CD4-positive, alpha-beta memory T cell (primary cell): ENCODE measurements at regions of chr5 and their contacts with region 1.

Region 1: GRCh38 chr5:139403787-139404483 is at the start of gene SPATA24:
- DNase-seq: peak; percentile 97 to 98 (median 98)
- H3K4me3 ChIP-seq: peak within 1 kb of the TSS; percentile 71 to 90
- H3K4me3 Mint-ChIP-seq: peak within 1 kb of the TSS; percentile 91 to 99 (median 94)
- H3K27ac ChIP-seq: peak within 1 kb of the TSS; percentile 85
- H3K27ac Mint-ChIP-seq: peak within 1 kb of the TSS; percentile 91 to 100 (median 99)
- H3K4me1 ChIP-seq: peaks cover 20% of the 10 kb centered on the region
- H3K4me1 Mint-ChIP-seq: peaks cover 16 to 31% (median 22%) of the 10 kb centered on the region in 4 donors
- H3K27me3 ChIP-seq: no peaks in the 10 kb centered on the region
- H3K27me3 Mint-ChIP-seq: no peaks in the 10 kb centered on the region
- total RNA-seq, gene SPATA24: 5.6 to 7.5 TPM

Region 2: DNA sequence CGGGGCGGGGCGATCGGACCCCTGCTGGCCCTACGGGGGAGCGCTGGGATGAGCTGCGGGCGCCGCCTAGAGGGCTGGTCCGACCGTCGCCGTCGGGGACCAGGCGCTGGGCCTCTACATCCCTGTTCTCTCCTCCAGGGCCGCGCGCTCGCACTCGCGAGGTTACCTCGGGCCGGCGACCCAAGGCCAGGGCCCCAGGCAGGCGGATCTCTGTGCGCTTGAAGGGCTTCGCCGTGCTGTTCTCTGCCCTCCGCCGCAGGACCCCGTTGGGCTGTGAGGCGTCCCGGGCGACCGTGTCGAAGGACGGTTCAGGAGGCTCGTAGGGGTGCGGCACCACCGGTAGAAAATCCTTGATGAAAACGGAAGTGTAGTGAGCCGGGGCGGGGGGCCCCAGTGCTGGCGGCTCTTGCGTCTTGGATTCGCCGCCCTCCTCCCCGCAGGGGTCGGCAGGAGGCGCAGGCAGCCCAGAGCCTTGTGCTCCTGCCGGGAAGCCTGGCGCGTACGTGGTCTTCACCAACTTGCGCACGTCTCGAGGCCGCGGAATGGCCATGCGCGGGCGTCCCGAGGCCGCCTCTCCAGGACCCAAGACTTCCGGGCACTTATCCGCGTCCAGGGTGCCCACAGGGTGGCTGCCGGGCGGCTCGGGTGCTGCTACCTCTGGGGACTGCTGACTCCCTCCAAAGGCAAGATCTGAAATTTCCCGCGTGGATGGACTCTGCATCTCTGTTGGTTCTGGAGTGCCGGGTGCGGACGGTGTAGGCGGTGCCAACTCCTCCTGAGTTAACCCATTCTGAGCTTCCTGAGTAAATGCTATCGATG is 11.0 kb before region 1 on chr5:
- CTCF ChIA-PET with region 1: interaction called, 25 read pairs
- POLR2A ChIA-PET with region 1: interaction called, 49 read pairs
- intact Hi-C with region 1: loop called (anchors 1 kb)
- DNase-seq: peak; percentile 69 to 81 (median 73)
- H3K4me3 ChIP-seq: peak overlapping the region; percentile 61 to 69
- H3K4me3 Mint-ChIP-seq: peak overlapping the region; percentile 88 to 94 (median 88)
- H3K27ac ChIP-seq: peak overlapping the region; percentile 39
- H3K27ac Mint-ChIP-seq: peak overlapping the region; percentile 57 to 93 (median 85)
- H3K4me1 ChIP-seq: peaks cover 42% of the 10 kb centered on the region
- H3K4me1 Mint-ChIP-seq: peaks cover 22 to 43% (median 30%) of the 10 kb centered on the region in 4 donors
- H3K27me3 ChIP-seq: no peaks in the 10 kb centered on the region
- H3K27me3 Mint-ChIP-seq: no peaks in the 10 kb centered on the region

Region 3: DNA sequence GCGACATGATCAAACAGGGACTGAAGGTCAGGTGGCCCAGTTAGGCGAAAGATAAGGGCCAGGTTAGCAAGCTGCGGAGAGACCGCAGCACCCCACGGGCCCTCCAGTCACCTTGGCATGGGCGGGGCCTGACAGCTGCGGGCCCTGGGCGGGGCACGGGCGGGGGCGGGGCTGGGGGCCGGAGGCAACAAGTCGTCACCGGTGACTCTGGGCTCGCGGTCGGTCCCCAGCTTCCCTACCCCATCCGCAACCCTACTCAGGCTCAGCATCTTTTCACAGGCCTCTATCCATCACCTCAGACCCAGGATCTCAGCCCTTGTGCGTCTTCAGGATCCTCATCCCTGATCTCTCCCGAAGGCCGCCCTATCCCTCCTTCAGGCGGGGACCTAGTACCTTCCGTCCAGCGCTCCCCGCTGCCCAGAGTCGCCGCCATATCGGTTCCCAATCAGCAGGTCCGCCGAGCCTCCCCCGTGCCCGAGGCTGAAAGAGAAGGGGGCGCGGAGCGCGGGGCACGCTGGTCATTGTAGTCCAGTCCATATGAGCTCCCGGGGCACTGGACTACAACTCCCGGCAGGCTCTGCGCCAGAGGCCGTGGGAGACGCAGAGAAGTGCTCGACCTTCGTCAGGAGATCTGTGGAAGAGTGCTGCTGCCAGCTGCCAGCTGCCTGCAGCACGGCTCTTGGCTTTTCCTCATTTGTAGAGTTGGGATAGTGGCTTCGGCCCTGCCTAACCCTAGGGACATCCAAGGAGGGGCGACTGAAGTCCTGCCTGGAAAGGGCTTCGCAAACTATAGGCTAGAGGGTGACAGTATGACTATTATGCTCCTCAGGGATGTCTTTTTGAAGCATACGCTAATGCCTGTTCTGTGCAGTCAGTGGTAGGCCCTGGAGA is 35.3 kb after region 1 on chr5 and contains the start of gene DNAJC18:
- CTCF ChIA-PET with region 1: interaction called, 3 read pairs
- POLR2A ChIA-PET with region 1: interaction called, 6 read pairs
- intact Hi-C with region 1: loop called (anchors 1 kb)
- DNase-seq: peak; percentile 84 to 90 (median 86)
- H3K4me3 ChIP-seq: peak within 1 kb of the TSS; percentile 83 to 91
- H3K4me3 Mint-ChIP-seq: peak within 1 kb of the TSS; percentile 96 to 99 (median 98)
- H3K27ac ChIP-seq: peak within 1 kb of the TSS; percentile 99
- H3K27ac Mint-ChIP-seq: peak within 1 kb of the TSS; percentile 93 to 100 (median 100)
- H3K4me1 ChIP-seq: peaks cover 31% of the 10 kb centered on the region
- H3K4me1 Mint-ChIP-seq: peaks cover 32 to 63% (median 41%) of the 10 kb centered on the region in 4 donors
- H3K27me3 ChIP-seq: no peaks in the 10 kb centered on the region
- H3K27me3 Mint-ChIP-seq: no peaks in the 10 kb centered on the region
- total RNA-seq, gene DNAJC18: 6.2 to 7.3 TPM

Region 4: GRCh38 chr5:139560752-139561654 is 157.1 kb after region 1 on chr5 and contains the start of gene UBE2D2:
- CTCF ChIA-PET with region 1: interaction called, 4 read pairs
- POLR2A ChIA-PET with region 1: interaction called, 12 read pairs
- intact Hi-C with region 1: loop called (anchors 1 kb)
- DNase-seq: peak; percentile 96 to 99 (median 97)
- H3K4me3 ChIP-seq: peak within 1 kb of the TSS; percentile 60 to 90
- H3K4me3 Mint-ChIP-seq: peak within 1 kb of the TSS; percentile 94 to 99 (median 98)
- H3K27ac ChIP-seq: peak within 1 kb of the TSS; percentile 93
- H3K27ac Mint-ChIP-seq: peak within 1 kb of the TSS; percentile 93 to 99 (median 96)
- H3K4me1 ChIP-seq: peaks cover 42% of the 10 kb centered on the region
- H3K4me1 Mint-ChIP-seq: peaks cover 25 to 48% (median 37%) of the 10 kb centered on the region in 4 donors
- H3K27me3 ChIP-seq: no peaks in the 10 kb centered on the region
- H3K27me3 Mint-ChIP-seq: no peaks in the 10 kb centered on the region
- total RNA-seq, gene UBE2D2: 160 to 169 TPM